Psoas muscle (tissue), 8 donors: ENCODE measurements at regions of chr15 and their contacts with region 1.

Region 1: DNA sequence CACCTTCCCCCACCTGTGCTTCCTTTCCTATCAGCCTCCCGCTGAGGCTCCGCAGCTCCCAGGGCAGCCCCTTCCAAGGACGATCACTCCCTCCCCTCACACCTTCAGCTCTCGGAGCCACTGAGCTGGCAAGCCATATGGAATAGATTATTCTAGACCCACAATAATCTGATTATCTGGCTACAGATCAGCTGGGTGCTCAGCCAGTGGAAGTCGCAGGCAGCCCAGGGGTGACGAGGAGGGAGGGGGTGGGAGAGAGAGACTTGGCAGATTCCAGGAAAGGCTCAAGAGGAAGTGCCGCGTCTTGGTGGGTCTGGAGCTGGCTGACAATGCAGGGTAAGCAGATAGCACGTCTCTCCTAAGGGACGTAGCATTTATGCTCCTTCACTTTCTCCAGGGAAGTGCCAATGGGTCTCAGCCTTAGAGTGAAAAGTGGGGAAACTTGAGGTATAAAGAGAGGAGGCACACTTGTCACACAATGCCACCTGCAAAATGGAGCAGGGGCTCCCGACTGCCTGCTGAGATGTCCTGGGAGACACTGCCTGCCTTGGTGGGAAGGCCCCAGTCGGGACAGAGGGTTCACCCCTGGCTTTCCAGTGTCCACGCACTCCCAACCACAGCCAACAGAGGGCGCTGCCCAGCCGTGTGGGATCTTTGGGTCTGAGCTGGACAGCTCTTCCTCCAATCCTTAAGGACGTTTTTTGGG is 9.4 kb upstream of the MESP1 start:
- DNase-seq: peak; percentile 83 to 90
- ATAC-seq: peak; percentile 90 to 93 (median 92)
- H3K4me3 ChIP-seq: no peak overlapping the region
- H3K27ac ChIP-seq: no peak overlapping the region
- H3K4me1 ChIP-seq: peaks cover 5% of the 10 kb centered on the region
- H3K27me3 ChIP-seq: no peaks in the 10 kb centered on the region
- CTCF ChIP-seq: peak; percentile 95

Region 2: GRCh38 chr15:89874926-89875564 is 114.6 kb after region 1 on chr15:
- intact Hi-C with region 1: loop called (anchors 2 kb)
- DNase-seq: peak; percentile 79 to 90
- ATAC-seq: peak; percentile 92 to 96 (median 95)
- H3K4me3 ChIP-seq: no peak overlapping the region
- H3K27ac ChIP-seq: no peak overlapping the region
- H3K4me1 ChIP-seq: peaks cover 6% of the 10 kb centered on the region
- H3K27me3 ChIP-seq: no peaks in the 10 kb centered on the region
- CTCF ChIP-seq: peak; percentile 94